Activated CD8-positive, alpha-beta T cell treated with anti-CD3 and anti-CD28 coated beads for 36 hours (primary cell): ENCODE measurements at regions of chr5 and their contacts with region 1.

Region 1: DNA sequence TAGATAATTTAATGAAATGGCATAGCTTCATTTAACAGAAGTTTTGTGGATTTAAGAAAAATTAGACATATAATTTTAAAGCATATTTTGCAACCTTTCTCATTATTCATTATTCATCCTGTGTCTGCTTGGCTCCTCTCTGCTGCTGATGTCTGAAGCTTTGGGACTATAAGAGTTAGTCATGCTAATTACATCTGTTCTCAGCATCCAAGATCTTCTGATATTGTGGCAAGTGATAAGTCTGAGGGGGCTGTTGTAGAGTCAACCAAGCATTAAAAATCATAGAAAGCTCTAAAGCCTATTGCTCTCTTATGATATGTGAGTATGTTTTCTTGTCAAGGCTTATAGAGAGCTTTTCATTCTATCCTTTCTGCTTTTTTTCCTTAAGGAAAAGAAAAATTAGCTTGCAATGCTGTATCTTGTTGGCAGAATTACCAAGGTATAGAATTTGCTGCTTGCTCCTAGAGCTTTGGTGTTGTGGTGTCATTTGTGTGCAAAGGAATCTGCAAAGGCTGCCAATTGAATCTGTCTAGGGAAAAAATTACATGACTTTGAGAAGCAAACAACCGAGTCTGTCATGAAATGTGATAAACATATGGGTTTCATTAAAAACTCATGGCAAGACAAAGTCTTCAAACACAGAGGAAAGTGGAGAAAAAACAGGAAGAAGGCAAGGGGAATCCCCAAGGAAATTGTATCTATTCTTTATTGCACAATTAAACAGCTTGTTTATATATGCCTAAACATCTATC is 156.1 kb upstream of the DAB2 start:
- DNase-seq: no peak
- ATAC-seq: no peak
- H3K4me3 Mint-ChIP-seq: no peak overlapping the region
- H3K27ac Mint-ChIP-seq: no peak overlapping the region
- H3K4me1 Mint-ChIP-seq: peaks cover 5% of the 10 kb centered on the region
- H3K27me3 Mint-ChIP-seq: no peaks in the 10 kb centered on the region
- CTCF ChIP-seq: no peak

Region 2: GRCh38 chr5:39570403-39571027 is 10.4 kb before region 1 on chr5:
- CTCF ChIA-PET with region 1: interaction called, 12 read pairs
- POLR2A ChIA-PET with region 1: no interaction called
- intact Hi-C with region 1: no loop called
- DNase-seq: no peak
- ATAC-seq: no peak
- H3K4me3 Mint-ChIP-seq: no peak overlapping the region
- H3K27ac Mint-ChIP-seq: no peak overlapping the region
- H3K4me1 Mint-ChIP-seq: peaks cover 2% of the 10 kb centered on the region
- H3K27me3 Mint-ChIP-seq: peaks cover 5% of the 10 kb centered on the region
- CTCF ChIP-seq: peak; percentile 57

Region 3: DNA sequence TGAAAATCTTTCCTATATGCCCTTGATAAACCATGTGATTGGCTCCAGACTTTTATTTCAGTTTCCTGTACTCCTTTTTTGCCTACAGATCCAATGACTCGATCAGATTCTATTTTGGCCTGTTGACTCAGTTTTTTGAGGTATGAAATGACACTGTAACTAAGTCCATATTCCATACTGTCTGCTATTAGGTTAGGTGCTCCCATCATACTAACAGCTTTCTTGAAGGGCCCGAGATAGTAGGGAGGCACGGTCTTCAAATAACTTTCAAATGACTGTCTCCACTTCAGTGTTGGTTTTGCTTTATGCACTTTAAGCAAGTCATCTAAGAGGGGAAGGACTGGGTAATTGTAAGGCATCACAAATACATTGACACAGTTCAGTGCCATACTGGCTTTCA is 139.3 kb after region 1 on chr5:
- CTCF ChIA-PET with region 1: no interaction called
- POLR2A ChIA-PET with region 1: no interaction called
- intact Hi-C with region 1: no loop called
- DNase-seq: no peak
- ATAC-seq: no peak
- H3K4me3 Mint-ChIP-seq: no peak overlapping the region
- H3K27ac Mint-ChIP-seq: no peak overlapping the region
- H3K4me1 Mint-ChIP-seq: no peaks in the 10 kb centered on the region
- H3K27me3 Mint-ChIP-seq: peaks cover 3% of the 10 kb centered on the region
- CTCF ChIP-seq: no peak